ENCODE measurements at regions of chr2 and their contacts with region 1.

Region 1: DNA sequence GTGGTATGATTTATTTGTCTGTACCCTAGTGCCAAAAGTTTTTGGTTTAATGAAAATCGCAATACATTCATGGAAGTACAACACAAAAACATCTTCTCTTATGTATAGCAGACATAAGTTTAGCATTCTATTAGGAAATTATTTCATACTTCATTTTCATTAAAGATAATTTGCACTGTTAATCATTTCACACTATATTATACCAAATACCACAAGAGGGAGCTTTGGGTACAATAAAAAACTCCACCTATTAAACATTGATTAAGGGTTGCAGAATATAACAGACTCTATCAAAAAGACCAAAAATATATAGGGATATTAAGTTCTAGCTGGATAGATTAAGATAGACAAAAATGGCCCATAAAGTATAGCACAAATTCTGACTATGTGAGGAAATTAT is 79.0 kb downstream of the SLC66A3 start:
- DNase-seq: no peak
- H3K4me3 ChIP-seq: no peak overlapping the region
- H3K27ac ChIP-seq: no peak overlapping the region
- H3K4me1 ChIP-seq: peaks cover 2% of the 10 kb centered on the region
- H3K27me3 ChIP-seq: no peaks in the 10 kb centered on the region
- CTCF ChIP-seq: peak; percentile 17 to 54 (median 25)
- EP300 ChIP-seq: no peak
- POLR2A ChIP-seq: no peak

Region 2: GRCh38 chr2:11583840-11584524 is 349.7 kb after region 1 on chr2:
- intact Hi-C with region 1: loop called in 1 of 4 experiments (anchors 10 kb)
- DNase-seq: peak; percentile 82 to 92 (median 85)
- H3K4me3 ChIP-seq: no peak overlapping the region
- H3K27ac ChIP-seq: peak overlapping the region; percentile 68 to 74
- H3K4me1 ChIP-seq: peaks cover 19% of the 10 kb centered on the region
- H3K27me3 ChIP-seq: no peaks in the 10 kb centered on the region
- CTCF ChIP-seq: peak; percentile 78 to 94 (median 94)
- EP300 ChIP-seq: no peak
- POLR2A ChIP-seq: no peak

Measured in ovary (tissue), 10 donors.